Psoas muscle (tissue), 8 donors: ENCODE measurements at regions of chr12 and their contacts with region 1.

Region 1: DNA sequence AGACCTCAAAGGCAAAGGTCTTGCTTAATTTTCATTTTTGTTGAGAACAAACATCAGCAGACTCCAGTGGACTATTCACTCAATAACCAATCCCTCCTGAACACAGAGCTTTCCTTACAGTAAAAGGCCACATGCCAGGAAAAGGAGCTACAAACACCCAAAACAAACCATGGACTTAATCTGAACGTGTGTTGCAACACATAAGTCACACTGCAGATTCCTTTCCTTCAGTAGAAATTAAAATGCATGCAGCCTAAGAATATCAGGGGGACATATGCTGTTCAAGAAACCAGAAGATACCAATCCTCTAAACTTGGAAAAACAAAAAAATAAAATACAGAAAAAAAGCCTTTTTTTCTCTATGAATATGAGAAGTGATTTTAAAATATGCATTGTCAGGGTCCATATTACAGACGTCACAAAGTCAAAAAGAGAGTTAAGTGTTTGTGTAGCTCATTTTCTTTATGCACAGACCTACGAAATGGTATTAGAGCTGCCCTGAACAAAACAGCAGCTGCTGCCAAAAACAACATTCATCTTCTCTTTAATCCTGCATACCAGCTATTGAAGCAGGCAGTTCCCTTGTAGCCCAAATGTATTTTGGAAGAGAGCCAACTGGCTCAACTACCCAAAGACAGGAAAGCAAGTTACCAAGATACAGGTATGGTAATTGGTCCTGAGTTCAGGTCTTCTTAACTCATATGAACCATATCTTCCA is 26.2 kb downstream of the KITLG start:
- DNase-seq: no peak
- ATAC-seq: peak in 1 of 4 donors; percentile 24
- H3K4me3 ChIP-seq: no peak overlapping the region
- H3K27ac ChIP-seq: peak overlapping the region; percentile 24
- H3K4me1 ChIP-seq: peaks cover 7% of the 10 kb centered on the region
- H3K27me3 ChIP-seq: no peaks in the 10 kb centered on the region
- CTCF ChIP-seq: no peak

Region 2: DNA sequence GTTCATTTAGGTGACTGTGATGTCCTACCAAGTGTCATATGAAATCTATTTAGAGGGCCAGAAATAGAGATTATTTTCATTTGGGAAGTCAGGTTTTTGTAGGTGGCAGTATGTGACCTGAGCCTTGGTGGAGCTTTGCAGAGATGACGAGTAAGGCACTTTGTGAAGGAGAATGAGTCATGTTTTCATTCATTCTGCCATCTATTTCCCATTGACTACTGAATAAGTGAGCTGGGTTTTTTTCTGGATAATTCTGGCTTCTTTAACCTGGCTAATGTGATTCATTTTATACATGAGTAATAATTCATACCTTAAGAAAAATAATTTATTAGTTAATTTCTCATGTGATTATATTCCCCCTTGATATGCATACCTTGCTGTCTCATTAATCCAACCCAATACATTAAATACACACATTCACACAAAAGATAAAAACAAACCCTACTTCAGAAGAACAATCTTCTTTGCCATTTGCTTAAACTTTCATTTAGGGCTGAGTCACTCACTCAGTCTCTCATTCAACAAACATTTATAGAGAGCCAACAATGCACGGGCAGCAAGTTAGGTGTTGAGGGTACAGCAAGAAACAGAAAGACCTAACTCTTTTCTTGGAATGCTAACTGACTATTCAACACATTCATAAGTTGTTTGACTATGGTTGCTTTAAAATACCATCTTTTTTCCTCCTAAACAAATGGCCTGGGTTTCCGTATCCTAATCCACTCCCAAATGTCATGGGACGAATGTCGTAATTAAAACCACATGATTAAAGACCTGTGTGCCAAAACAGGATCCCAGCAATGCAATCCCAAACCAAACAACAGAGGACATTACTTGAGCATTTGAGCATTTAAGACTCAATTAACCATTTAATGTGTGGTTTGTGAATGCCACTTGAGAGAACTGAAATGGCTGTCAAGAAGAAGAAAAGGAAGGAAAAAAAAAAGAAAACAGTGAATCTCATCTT is 51.8 kb before region 1 on chr12:
- intact Hi-C with region 1: loop called in 1 of 2 experiments (anchors 10 kb)
- DNase-seq: no peak
- ATAC-seq: no peak
- H3K4me3 ChIP-seq: no peak overlapping the region
- H3K27ac ChIP-seq: no peak overlapping the region
- H3K4me1 ChIP-seq: no peaks in the 10 kb centered on the region
- H3K27me3 ChIP-seq: no peaks in the 10 kb centered on the region
- CTCF ChIP-seq: no peak

Region 3: DNA sequence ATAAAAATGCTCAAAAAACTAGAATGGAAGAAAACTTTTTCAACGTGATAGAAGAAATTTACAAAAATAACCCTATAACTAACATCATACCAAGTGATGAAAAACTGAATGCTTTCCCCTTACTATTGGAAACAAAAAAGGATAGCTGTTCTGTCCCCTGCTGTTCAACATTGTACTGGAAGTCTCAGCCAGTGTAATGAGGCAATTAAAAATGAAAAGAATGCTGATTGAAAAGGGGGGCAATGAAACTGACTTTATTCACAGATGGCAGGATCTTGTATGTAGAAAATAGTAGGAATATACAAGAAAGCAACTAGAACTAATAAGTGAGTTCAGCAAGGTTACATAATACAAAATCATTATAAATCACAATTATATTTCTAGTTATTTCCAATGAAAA is 364.1 kb after region 1 on chr12:
- intact Hi-C with region 1: no loop called
- DNase-seq: no peak
- ATAC-seq: no peak
- H3K4me3 ChIP-seq: no peak overlapping the region
- H3K27ac ChIP-seq: no peak overlapping the region
- H3K4me1 ChIP-seq: peaks cover 17% of the 10 kb centered on the region
- H3K27me3 ChIP-seq: no peaks in the 10 kb centered on the region
- CTCF ChIP-seq: no peak